GM12878 (cell line): ENCODE measurements at regions of chr6 and their contacts with region 1.

Region 1: DNA sequence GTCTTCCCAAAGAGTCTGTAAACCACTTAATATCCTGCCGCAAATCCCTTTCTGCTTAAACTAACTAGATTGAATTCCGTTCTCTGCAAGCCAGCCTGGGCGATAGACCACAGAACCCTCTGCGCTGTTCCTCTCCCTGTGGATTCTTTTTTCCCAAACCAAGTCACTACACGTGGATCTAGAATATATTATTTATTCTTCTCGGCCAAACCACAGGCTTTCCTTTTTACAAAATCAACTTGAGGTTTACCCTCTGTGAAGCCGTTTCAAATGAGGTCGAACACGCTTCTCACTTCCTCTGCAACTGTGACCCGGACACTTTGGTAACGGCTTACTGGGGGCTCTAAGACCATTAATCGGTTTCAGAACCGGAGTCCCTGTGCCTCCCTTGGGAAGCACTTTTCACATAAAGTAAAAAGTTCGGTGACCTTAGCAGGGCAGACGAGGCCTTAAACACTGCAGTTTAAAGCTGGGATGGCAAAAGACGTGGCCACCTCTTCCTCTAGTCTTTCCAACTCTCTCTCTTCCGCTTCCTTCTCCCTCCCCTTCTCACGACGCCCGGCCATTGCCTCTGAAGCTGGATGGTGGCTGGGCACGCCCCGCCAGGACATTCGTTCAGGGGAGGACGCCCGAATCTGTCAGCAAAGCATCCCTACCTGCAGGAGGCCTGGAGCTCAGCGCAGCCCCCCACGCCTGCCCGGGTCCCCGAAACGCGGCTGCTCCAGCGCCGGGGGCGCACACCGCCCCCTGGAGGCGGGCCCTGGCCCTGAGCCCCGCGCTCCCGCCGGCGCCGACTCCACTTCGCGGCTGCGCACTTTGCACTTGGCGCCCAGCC is 55.0 kb upstream of the FOXC1 start:
- DNase-seq: peak; percentile 57
- ATAC-seq: peak; percentile 89
- H3K4me3 ChIP-seq: no peak overlapping the region
- H3K27ac ChIP-seq: peak overlapping the region; percentile 10; the same call in 1 of the 2 replicates
- H3K4me1 ChIP-seq: peaks cover 9% of the 10 kb centered on the region
- H3K27me3 ChIP-seq: peaks cover 0 to 3% of the 10 kb centered on the region in 2 experiments; a peak in 1 of 4 replicates
- CTCF ChIP-seq: peak; percentile 31 to 55 (median 37); a peak in 5 of 6 replicates
- EP300 ChIP-seq: peak; percentile 26 to 32; a peak in 2 of 4 replicates
- POLR2A ChIP-seq: no peak
- RAD21 ChIP-seq: no peak

Region 2: DNA sequence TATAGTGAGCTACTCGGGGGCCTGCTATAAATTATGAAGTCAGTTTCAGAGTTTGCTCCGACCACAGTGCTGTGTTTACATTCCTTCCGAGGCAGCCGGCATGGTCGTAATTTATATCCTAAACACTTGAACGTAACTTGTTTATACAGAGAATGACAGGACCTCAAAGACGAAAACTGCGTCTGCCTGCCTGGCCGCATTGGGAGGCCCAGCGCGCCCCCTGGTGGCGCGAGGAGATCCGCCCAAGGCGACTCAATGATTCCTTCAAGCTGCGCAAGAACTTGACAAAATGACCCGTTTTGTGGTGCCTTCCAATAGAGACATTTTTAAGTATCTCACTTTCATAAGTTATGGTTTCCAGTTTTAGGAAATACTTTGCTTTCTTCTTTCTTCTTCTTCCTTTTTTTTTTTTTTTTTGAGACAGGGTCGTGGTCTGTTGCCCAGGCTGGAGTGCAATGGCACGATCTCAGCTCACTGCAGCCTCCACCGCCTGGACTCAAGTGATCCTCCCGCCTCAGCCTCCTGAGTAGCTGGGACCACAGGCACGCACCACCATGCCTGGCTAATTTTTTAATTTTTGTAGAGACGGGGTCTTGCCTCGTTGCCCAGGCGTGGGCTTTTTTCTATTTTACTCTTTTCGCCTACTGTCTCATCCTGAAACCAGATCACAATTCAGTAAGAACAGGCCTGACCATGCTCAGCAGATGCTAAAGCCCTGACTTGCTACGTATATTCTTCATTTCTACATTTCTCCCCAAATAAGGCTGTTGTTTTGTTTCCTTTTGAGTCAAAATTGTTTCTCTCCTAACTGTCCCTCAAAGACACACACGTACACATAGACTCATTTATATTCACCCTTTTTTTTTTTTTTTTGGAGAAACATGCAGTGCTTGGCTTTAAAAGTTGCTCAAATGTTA is 157.5 kb before region 1 on chr6:
- CTCF ChIA-PET with region 1: interaction called, 10 read pairs
- POLR2A ChIA-PET with region 1: no interaction called
- RAD21 ChIA-PET with region 1: no interaction called
- SMC1A ChIA-PET with region 1: no interaction called
- in situ Hi-C with region 1: no loop called
- intact Hi-C with region 1: no loop called
- DNase-seq: peak; percentile 43
- ATAC-seq: peak; percentile 92
- H3K4me3 ChIP-seq: no peak overlapping the region
- H3K27ac ChIP-seq: no peak overlapping the region
- H3K4me1 ChIP-seq: no peaks in the 10 kb centered on the region
- H3K27me3 ChIP-seq: peaks cover 11 to 17% of the 10 kb centered on the region in 2 experiments
- CTCF ChIP-seq: peak; percentile 88 to 98 (median 97)
- EP300 ChIP-seq: peak; percentile 58 to 74; a peak in 2 of 4 replicates
- POLR2A ChIP-seq: no peak
- RAD21 ChIP-seq: peak; percentile 80

Region 3: GRCh38 chr6:1424306-1424928 is 130.3 kb before region 1 on chr6:
- CTCF ChIA-PET with region 1: interaction called, 13 read pairs
- POLR2A ChIA-PET with region 1: no interaction called
- RAD21 ChIA-PET with region 1: no interaction called
- SMC1A ChIA-PET with region 1: interaction called, 3 read pairs
- in situ Hi-C with region 1: no loop called
- intact Hi-C with region 1: no loop called
- DNase-seq: no peak
- ATAC-seq: peak; percentile 90
- H3K4me3 ChIP-seq: no peak overlapping the region
- H3K27ac ChIP-seq: no peak overlapping the region
- H3K4me1 ChIP-seq: no peaks in the 10 kb centered on the region
- H3K27me3 ChIP-seq: peaks cover 0 to 2% of the 10 kb centered on the region in 2 experiments; a peak in 2 of 4 replicates
- CTCF ChIP-seq: peak; percentile 60 to 74 (median 73)
- EP300 ChIP-seq: no peak
- POLR2A ChIP-seq: no peak
- RAD21 ChIP-seq: peak; percentile 55

Region 4: GRCh38 chr6:1436334-1437306 is 118.1 kb before region 1 on chr6:
- CTCF ChIA-PET with region 1: interaction called, 16 read pairs
- POLR2A ChIA-PET with region 1: no interaction called
- RAD21 ChIA-PET with region 1: interaction called, 7 read pairs
- SMC1A ChIA-PET with region 1: no interaction called
- in situ Hi-C with region 1: no loop called
- intact Hi-C with region 1: loop called (anchors 5 kb)
- DNase-seq: peak; percentile 30
- ATAC-seq: peak; percentile 92
- H3K4me3 ChIP-seq: no peak overlapping the region
- H3K27ac ChIP-seq: no peak overlapping the region
- H3K4me1 ChIP-seq: no peaks in the 10 kb centered on the region
- H3K27me3 ChIP-seq: peaks cover 0 to 3% of the 10 kb centered on the region in 2 experiments; a peak in 3 of 4 replicates
- CTCF ChIP-seq: peak; percentile 57 to 82 (median 68); a peak in 5 of 6 replicates
- EP300 ChIP-seq: no peak
- POLR2A ChIP-seq: no peak
- RAD21 ChIP-seq: peak; percentile 78

Region 5: GRCh38 chr6:1470040-1470439 is 84.7 kb before region 1 on chr6:
- CTCF ChIA-PET with region 1: interaction called, 12 read pairs
- POLR2A ChIA-PET with region 1: no interaction called
- RAD21 ChIA-PET with region 1: interaction called, 5 read pairs
- SMC1A ChIA-PET with region 1: interaction called, 3 read pairs
- in situ Hi-C with region 1: no loop called
- intact Hi-C with region 1: no loop called
- DNase-seq: peak; percentile 74
- ATAC-seq: peak; percentile 93
- H3K4me3 ChIP-seq: peak overlapping the region; percentile 35; the same call in 1 of the 2 replicates
- H3K27ac ChIP-seq: peak overlapping the region; percentile 57
- H3K4me1 ChIP-seq: peaks cover 34% of the 10 kb centered on the region
- H3K27me3 ChIP-seq: no peaks in the 10 kb centered on the region
- CTCF ChIP-seq: no peak
- EP300 ChIP-seq: peak; percentile 50 to 76; a peak in 2 of 4 replicates
- POLR2A ChIP-seq: no peak
- RAD21 ChIP-seq: no peak

Region 6: GRCh38 chr6:1524040-1524480 is 30.6 kb before region 1 on chr6:
- CTCF ChIA-PET with region 1: interaction called, 14 read pairs
- POLR2A ChIA-PET with region 1: no interaction called
- RAD21 ChIA-PET with region 1: interaction called, 3 read pairs
- SMC1A ChIA-PET with region 1: no interaction called
- in situ Hi-C with region 1: no loop called
- intact Hi-C with region 1: no loop called
- DNase-seq: no peak
- ATAC-seq: peak; percentile 66
- H3K4me3 ChIP-seq: no peak overlapping the region
- H3K27ac ChIP-seq: no peak overlapping the region
- H3K4me1 ChIP-seq: peaks cover 7% of the 10 kb centered on the region
- H3K27me3 ChIP-seq: 0 out of 4 replicates have a peak, but pooled peaks cover 0 to 2% of the 10 kb centered on the region in 2 experiments
- CTCF ChIP-seq: peak; percentile 39 to 60 (median 46)
- EP300 ChIP-seq: no peak
- POLR2A ChIP-seq: no peak
- RAD21 ChIP-seq: peak; percentile 36; the same call in 1 of the 2 replicates

Region 7: GRCh38 chr6:1575210-1576041 is 20.7 kb after region 1 on chr6:
- CTCF ChIA-PET with region 1: interaction called, 9 read pairs
- POLR2A ChIA-PET with region 1: interaction called, 3 read pairs
- RAD21 ChIA-PET with region 1: interaction called, 3 read pairs
- SMC1A ChIA-PET with region 1: interaction called, 41 read pairs
- in situ Hi-C with region 1: no loop called
- intact Hi-C with region 1: no loop called
- DNase-seq: peak; percentile 67
- ATAC-seq: peak; percentile 75
- H3K4me3 ChIP-seq: no peak overlapping the region
- H3K27ac ChIP-seq: no peak overlapping the region
- H3K4me1 ChIP-seq: peaks cover 22% of the 10 kb centered on the region
- H3K27me3 ChIP-seq: peaks cover 0 to 2% of the 10 kb centered on the region in 2 experiments; a peak in 1 of 4 replicates
- CTCF ChIP-seq: no peak
- EP300 ChIP-seq: peak; percentile 17 to 60; a peak in 1 of 4 replicates
- POLR2A ChIP-seq: no peak
- RAD21 ChIP-seq: no peak

Region 8: GRCh38 chr6:2505624-2506023 is 950.9 kb after region 1 on chr6:
- CTCF ChIA-PET with region 1: no interaction called
- POLR2A ChIA-PET with region 1: no interaction called
- RAD21 ChIA-PET with region 1: no interaction called
- SMC1A ChIA-PET with region 1: no interaction called
- in situ Hi-C with region 1: no loop called
- intact Hi-C with region 1: no loop called
- DNase-seq: no peak
- ATAC-seq: no peak
- H3K4me3 ChIP-seq: no peak overlapping the region
- H3K27ac ChIP-seq: no peak overlapping the region
- H3K4me1 ChIP-seq: no peaks in the 10 kb centered on the region
- H3K27me3 ChIP-seq: peaks cover 0 to 1% of the 10 kb centered on the region in 2 experiments; a peak in 2 of 4 replicates
- CTCF ChIP-seq: peak in 2 of 3 experiments; percentile 32 to 34; a peak in 3 of 6 replicates
- EP300 ChIP-seq: no peak
- POLR2A ChIP-seq: no peak
- RAD21 ChIP-seq: no peak